Activated CD4-positive, alpha-beta memory T cell treated with anti-CD3 and anti-CD28 coated beads, Interleukin-2, amount 10 ng/mL, durations not matched to agents 7 days and 5 days (primary cell): ENCODE measurements at regions of chr17 and their contacts with region 1.

Region 1: DNA sequence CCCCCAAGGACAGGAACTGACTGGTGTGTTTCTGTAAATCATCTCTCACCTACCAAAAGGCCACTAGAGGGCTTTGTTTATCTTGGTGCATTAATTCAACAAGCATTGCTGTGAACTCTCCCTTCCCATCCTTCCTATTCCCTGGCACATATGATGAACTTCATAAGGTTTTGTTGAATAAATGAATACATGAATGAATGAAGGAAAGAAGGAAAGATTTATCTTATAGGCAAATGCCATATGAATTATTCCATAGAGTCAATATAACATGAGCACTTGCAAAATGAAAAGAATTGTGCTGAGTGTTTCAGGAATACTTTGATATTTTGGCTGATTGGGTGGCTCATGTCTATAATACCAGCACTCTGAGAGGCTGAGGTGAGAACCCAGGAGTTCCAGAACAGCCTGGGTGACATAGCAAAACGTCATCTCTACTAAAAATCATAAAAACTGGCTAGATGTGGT is 4.3 kb downstream of the SPDYE4 start:
- DNase-seq: no peak
- H3K4me3 Mint-ChIP-seq: no peak overlapping the region
- H3K27ac Mint-ChIP-seq: no peak overlapping the region
- H3K4me1 Mint-ChIP-seq: no peaks in the 10 kb centered on the region
- H3K27me3 Mint-ChIP-seq: peaks cover 14% of the 10 kb centered on the region

Region 2: DNA sequence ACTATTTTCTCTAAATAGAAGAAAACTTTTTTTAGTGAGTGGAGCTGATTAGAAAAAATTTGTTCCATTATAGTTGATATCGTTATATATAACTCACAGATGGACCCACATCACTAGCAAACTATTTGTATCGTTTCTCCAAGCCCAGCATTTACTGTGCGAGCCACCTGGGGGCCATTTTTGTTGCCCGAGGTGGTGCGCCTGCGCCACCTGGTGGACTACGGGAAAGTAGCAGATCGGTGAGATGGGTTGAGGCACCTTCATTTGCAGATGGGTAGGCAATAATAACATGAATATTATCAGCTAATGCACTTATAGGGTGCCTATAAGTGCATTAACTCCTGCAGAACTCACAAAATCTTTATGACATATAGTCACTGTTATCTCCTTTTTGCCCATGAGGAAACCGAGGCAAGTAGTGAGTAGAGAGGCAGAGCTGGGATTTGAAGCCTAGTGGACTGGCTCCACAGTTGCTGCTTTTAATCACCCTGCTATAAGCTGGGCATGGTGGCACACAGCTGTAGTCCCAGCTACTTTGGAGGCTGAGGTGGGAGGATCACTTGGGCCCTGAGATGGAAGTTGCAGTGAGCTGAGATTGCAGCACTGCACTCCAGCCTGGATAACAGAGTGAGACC is 244.1 kb after region 1 on chr17:
- CTCF ChIA-PET with region 1: interaction called, 12 read pairs
- POLR2A ChIA-PET with region 1: no interaction called
- DNase-seq: peak; percentile 81
- H3K4me3 Mint-ChIP-seq: no peak overlapping the region
- H3K27ac Mint-ChIP-seq: no peak overlapping the region
- H3K4me1 Mint-ChIP-seq: peaks cover 12% of the 10 kb centered on the region
- H3K27me3 Mint-ChIP-seq: peaks cover 34% of the 10 kb centered on the region